Thyroid gland (tissue), 4 donors: ENCODE measurements at regions of chr14 and their contacts with region 1.

Region 1: GRCh38 chr14:95534299-95535225 is at the start of gene GLRX5:
- DNase-seq: peak; percentile 99
- H3K4me3 ChIP-seq: peak within 1 kb of the TSS; percentile 69 to 86 (median 83)
- H3K27ac ChIP-seq: peak within 1 kb of the TSS; percentile 20 to 74 (median 49)
- H3K4me1 ChIP-seq: peaks cover 26 to 44% of the 10 kb centered on the region in 2 donors
- H3K27me3 ChIP-seq: no peaks in the 10 kb centered on the region
- CTCF ChIP-seq: no peak
- POLR2A ChIP-seq: peak; percentile 37 to 75
- total RNA-seq, gene GLRX5: 33.9 to 64.1 (median 41.3) TPM

Region 2: GRCh38 chr14:95157327-95158189 is 377.0 kb before region 1 on chr14 and contains the start of gene DICER1:
- intact Hi-C with region 1: loop called (anchors 5 kb)
- DNase-seq: peak; percentile 97 to 98
- H3K4me3 ChIP-seq: peak within 1 kb of the TSS; percentile 64 to 83 (median 74)
- H3K27ac ChIP-seq: peak within 1 kb of the TSS; percentile 88 to 98 (median 94)
- H3K4me1 ChIP-seq: peaks cover 32 to 35% of the 10 kb centered on the region in 2 donors
- H3K27me3 ChIP-seq: no peaks in the 10 kb centered on the region
- CTCF ChIP-seq: peak in 1 of 6 experiments; percentile 9
- POLR2A ChIP-seq: peak in 1 of 2 donors; percentile 86
- total RNA-seq, gene DICER1: 66.5 to 96.8 (median 78.8) TPM

Region 3: GRCh38 chr14:95609387-95609990 is 74.9 kb after region 1 on chr14:
- intact Hi-C with region 1: no loop called
- DNase-seq: peak; percentile 8 to 11
- H3K4me3 ChIP-seq: no peak overlapping the region
- H3K27ac ChIP-seq: no peak overlapping the region
- H3K4me1 ChIP-seq: no peaks in the 10 kb centered on the region
- H3K27me3 ChIP-seq: no peaks in the 10 kb centered on the region
- CTCF ChIP-seq: peak in 2 of 6 experiments; percentile 16 to 35
- POLR2A ChIP-seq: no peak